Activated T-helper 1 cell treated with anti-CD3 and anti-CD28 coated beads, Interleukin-12 subunit alpha, Interleukin-12 subunit beta, Interleukin-2, Interleukin-4 antibody, amounts not matched to agents 30 ng/mL and 10 ng/mL and 1 ng/mL, durations not matched to agents 14 hours and 24 hours and 36 hours (primary cell): ENCODE measurements at regions of chr16 and their contacts with region 1.

Region 1: DNA sequence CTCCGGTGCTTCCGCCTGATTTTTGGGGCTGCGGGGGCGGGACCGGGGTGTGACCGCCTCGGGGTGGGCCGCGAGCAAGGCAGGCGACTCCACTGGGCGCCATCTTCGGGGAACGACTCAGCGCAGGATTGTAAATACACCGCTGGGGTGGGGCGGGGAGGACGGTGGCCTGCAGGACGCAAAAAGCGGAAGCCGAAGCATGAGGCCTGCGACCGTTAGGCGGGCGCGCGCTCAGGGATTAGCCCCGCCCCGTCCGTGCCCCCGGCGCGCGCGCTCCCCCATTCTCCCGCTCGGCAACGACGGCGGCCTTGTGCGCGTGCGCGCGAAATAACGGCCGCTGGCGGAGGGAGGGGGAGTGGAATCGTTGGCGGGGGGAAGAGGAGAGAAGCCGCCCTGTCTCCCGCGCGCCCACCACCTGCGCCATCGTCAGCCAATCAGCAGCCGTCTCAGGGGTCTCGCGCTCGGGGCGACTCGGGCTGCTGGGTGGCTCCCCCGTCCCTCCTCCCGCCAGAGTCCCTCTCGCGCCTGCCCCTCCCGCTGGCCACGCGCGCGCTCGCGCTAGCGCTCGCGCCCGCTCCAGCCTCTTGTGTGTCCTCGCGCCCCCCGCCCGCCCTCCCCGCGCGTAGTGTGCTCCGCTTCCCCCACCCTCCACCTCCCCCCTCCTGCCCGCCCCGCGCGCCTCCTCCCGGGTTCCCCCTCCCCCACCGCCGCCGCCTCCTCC is 791 bp upstream of the MAZ start:
- DNase-seq: peak; percentile 97
- H3K4me3 Mint-ChIP-seq: peak overlapping the region; percentile 100
- H3K27ac Mint-ChIP-seq: peak overlapping the region; percentile 100
- H3K4me1 Mint-ChIP-seq: peaks cover 42% of the 10 kb centered on the region
- H3K27me3 Mint-ChIP-seq: no peaks in the 10 kb centered on the region

Region 2: DNA sequence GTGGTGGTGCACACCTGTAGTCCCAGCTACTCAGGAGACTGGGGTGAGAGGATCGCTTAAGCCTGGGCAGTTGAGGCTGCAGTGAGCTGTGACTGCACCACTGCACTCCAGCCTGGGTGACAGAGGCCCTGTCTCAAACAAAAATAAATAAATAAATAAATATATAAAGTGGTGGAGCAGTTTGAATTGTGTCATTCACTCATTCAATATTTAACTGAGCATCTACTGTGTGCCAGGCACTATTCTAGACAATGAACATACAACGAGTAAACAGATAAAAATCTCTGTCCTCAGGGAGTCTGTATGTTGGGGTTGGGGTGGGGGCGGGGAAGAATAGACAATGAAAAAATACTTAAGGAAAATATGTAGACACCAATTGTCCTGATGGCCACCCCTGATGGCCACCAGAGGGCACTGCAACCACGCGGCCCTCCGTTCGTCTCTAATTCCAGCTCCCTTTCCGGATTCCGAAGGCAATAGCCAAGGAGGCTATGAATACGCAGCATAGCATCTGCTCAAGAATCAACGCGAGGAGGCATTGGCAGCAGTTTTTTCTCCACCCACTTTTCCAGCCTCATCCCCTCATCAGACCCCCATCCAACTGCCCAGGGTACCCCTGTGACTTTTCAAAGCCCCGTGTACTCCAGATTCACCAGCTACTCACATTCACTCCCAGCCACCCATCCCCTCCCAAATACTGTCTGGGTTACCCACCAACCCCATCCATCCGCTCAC is 105.1 kb before region 1 on chr16:
- intact Hi-C with region 1: loop called (anchors 1 kb)
- DNase-seq: peak; percentile 59
- H3K4me3 Mint-ChIP-seq: peak overlapping the region; percentile 43
- H3K27ac Mint-ChIP-seq: peak overlapping the region; percentile 90
- H3K4me1 Mint-ChIP-seq: peaks cover 30% of the 10 kb centered on the region
- H3K27me3 Mint-ChIP-seq: no peaks in the 10 kb centered on the region

Region 3: DNA sequence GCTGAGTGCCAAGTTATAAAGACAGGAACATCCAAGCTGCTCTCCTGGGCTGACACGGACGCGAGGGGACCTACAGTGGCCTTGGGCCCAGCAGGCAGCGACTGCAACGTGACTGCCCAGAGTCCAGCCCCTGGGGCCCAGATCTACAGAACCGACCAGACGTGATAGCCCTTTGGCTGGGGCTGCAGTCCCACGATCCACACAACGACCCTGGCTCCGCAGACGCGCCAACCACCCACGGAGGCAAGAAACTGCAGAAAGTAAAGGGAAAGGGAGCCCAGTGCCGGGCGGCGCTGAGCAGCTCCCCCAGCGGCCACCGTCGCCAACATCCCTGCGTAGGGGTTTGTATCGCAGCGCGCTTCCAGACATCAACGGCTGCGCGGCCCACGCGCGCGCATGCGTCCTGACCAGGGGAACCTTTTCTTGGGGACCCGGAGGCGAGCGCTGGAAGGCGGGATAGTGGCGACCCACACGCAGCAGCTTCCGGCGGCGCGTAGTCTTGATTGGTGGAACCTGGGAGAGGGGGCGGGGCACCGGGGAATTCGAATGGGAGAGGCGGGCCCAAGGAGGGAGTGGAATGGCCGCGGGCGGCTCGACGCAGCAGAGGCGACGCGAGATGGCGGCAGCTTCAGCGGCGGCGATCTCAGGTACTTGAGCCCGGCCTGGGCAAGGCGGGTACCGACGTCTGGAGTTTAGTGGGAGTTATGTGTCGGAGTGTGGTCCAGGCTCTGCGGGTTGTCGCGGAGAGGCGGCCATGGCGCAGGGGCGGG is 15.2 kb before region 1 on chr16 and contains the start of gene KIF22:
- intact Hi-C with region 1: loop called (anchors 1 kb)
- DNase-seq: peak; percentile 100
- H3K4me3 Mint-ChIP-seq: peak within 1 kb of the TSS; percentile 99
- H3K27ac Mint-ChIP-seq: peak within 1 kb of the TSS; percentile 97
- H3K4me1 Mint-ChIP-seq: peaks cover 44% of the 10 kb centered on the region
- H3K27me3 Mint-ChIP-seq: no peaks in the 10 kb centered on the region
- total RNA-seq, gene KIF22: 134 and 140 TPM in 2 replicates

Region 4: GRCh38 chr16:29825145-29826044 is 19.9 kb after region 1 on chr16:
- intact Hi-C with region 1: loop called (anchors 1 kb)
- DNase-seq: peak; percentile 50
- H3K4me3 Mint-ChIP-seq: peak overlapping the region; percentile 68
- H3K27ac Mint-ChIP-seq: peak overlapping the region; percentile 85
- H3K4me1 Mint-ChIP-seq: peaks cover 42% of the 10 kb centered on the region
- H3K27me3 Mint-ChIP-seq: no peaks in the 10 kb centered on the region

Region 5: DNA sequence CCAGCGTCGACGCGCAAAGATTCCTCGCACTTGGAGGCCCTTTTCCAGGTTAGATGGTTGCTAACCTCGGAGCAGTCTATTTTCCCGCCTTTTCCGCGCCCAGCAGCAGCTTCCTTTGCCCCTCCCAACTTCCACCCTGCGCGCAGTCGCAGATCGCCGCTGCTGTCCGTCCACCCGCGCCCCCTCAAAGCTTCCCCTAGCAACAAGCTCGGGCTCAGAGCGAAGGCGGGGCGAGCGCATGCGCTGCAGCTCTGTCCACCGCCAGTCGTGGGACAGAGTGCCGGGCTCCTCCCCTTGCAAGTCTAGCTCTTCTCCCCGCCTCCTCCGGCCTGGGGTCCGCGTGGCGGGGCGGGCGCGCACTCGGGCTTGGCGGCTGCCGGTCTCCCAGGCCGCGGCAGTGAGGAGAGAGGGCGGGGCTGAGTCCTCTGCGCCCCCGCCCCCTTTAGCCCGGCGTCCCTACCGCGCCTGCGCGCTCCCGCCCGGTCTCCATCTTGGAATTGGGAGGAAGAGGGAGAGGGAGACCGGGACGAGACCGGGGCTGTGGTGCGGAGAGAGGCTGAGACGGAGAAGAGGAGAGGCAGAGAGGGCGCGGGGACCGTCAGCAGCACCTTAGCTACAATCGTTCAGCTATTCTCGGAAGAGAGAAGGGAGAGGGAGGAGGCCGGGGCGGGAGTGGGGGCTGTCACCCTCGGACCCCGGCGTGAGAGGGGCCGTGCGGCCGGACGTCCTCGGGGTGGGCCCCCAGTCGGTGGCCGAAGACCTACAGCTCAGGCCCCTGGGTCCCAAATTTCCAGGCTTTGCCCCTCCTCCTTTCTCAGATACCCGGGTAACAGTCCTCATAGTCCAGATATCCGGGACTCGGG is 168.1 kb after region 1 on chr16 and contains the start of gene TAOK2:
- intact Hi-C with region 1: loop called (anchors 2 kb)
- DNase-seq: peak; percentile 97
- H3K4me3 Mint-ChIP-seq: peak within 1 kb of the TSS; percentile 92
- H3K27ac Mint-ChIP-seq: peak within 1 kb of the TSS; percentile 91
- H3K4me1 Mint-ChIP-seq: peaks cover 36% of the 10 kb centered on the region
- H3K27me3 Mint-ChIP-seq: no peaks in the 10 kb centered on the region
- total RNA-seq, gene TAOK2: 38.5 and 39.7 TPM in 2 replicates

Region 6: DNA sequence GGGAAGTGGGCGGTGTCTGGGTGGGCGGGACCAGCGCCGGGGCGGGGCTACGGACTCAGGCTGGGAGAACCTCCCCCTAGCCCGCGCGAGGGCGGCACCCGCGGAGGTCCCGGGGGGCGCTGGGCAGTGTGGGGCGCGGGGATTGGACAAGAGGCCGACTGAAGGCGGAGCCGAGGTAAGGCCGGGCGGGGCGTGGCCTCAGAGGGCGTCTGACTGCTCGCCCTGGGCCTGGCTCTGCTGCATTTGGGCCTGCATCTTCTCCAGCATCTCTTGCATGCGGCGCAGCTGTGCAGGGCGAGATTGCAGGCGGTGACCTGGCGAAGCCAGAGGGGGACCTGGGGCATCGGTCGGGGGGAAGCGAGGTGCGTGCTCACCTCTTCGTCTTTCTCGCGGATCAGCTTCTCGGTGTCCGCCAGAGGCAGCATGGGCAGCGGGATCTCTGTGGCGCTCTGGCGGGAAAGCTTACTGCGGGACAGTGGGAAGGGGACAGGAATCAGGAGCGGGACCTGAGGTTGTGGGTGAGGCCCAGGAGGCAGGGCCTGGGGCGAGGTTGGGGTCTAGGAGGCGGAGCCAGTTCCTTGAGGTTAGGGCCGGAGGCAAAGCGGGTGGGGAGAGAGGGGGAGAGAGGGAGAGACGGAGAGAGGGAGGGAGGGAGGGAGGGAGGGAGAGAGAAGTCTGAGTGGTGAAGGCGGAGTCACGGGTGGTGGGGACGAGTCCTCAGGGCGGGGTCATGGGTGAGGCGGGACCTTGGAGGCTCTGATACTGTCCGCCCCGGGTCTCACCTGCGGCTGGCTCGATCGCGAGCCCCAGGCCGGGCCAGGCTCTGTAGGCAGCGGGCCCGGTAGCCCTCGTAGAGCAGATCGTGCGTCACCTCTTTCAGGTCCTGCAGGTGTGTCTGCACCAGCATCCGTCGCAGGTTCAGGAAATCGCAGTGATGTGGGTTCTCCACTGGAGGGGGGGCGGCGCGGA is 573.0 kb after region 1 on chr16:
- intact Hi-C with region 1: loop called (anchors 5 kb)
- DNase-seq: peak; percentile 98
- H3K4me3 Mint-ChIP-seq: peak overlapping the region; percentile 97
- H3K27ac Mint-ChIP-seq: peak overlapping the region; percentile 100
- H3K4me1 Mint-ChIP-seq: peaks cover 55% of the 10 kb centered on the region
- H3K27me3 Mint-ChIP-seq: peaks cover 2% of the 10 kb centered on the region